Breast epithelium (tissue), 4 donors: ENCODE measurements at regions of chr2 and their contacts with region 1.

Region 1: DNA sequence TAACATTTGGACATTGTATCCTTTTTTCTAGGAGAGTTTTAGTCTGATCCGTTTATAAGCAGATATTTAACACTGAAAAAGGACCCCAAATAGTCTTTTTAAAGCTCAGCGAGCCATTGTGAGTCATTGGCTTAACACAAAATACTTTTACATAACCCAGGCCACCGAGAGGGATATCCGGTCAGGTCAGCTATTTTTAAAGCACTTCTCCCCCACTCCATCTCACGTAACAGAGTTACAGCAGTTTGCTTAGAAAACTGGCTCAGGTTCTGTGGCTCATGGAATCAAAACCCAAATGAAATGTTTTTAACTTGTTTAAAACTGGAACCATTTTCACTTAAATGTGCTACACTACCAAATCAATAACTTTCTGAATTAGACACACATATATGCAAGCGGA is 23.9 kb downstream of the COL4A3 start:
- DNase-seq: no peak
- H3K4me3 ChIP-seq: no peak overlapping the region
- H3K27ac ChIP-seq: no peak overlapping the region
- H3K4me1 ChIP-seq: no peaks in the 10 kb centered on the region
- H3K27me3 ChIP-seq: no peaks in the 10 kb centered on the region
- CTCF ChIP-seq: no peak
- POLR2A ChIP-seq: no peak

Region 2: DNA sequence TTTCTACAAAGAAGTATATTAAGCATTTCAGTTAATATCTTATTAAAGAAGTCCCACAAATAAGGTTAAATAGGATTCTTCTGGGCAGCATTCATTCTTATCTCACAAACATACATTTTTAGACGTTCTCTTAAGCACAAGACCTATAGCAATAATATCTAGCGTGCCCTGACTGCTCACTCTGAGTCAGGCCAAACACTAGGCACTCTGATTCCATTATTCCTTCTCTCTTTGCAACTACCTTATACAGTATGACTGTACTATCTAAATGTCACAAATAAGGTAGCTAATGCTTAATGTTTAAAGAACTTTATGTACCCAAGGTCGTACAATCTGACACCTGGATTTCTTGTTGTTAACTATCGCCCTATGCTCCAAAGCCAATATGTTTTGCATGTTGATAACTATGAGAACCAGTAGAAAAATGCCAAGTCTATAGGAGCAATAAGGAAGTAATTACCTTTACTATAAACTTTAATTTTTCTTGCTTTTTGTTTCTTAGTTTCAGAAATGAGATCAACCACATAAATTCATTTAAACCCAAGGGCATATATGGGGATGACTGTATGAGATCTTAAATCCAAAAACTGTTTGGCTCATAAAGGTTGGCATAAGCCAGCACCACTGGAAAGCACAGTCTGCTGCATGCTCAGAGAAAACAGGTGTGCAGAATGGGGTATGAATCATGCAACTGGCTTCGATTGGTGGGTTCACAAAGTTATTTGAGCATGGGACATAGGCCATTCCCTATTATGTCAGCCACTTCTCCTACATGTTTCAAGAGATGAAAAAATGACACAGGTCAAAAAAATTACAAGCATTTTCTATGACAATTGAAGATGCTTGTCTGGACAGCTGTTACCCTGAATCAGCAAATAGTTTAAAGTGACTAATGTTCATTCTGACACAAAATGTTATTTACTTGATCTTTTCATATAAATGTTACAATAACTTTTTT is 740.7 kb before region 1 on chr2:
- intact Hi-C with region 1: loop called (anchors 5 kb)
- DNase-seq: no peak
- H3K4me3 ChIP-seq: no peak overlapping the region
- H3K27ac ChIP-seq: no peak overlapping the region
- H3K4me1 ChIP-seq: no peaks in the 10 kb centered on the region
- H3K27me3 ChIP-seq: no peaks in the 10 kb centered on the region
- CTCF ChIP-seq: no peak
- POLR2A ChIP-seq: no peak

Region 3: DNA sequence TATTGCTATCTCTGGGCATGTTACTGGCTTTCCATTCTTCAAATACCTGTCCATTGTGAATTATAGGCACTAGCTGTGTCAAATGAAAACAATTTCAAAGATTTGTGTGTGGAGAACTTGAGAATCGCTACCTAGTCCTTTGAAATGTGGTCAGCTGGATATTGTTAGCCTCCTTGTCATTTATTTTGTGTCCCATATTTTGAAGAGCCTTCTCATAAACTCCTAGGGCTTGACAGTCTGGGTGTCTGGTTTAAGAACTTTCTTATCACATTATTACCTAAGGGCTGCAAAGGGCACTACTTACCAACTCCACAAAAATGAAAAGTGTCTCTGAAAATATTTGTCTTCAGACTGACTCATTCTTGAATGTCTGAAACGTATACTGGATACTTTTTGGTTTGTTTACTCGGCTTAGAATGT is 26.3 kb after region 1 on chr2:
- intact Hi-C with region 1: no loop called
- DNase-seq: no peak
- H3K4me3 ChIP-seq: no peak overlapping the region
- H3K27ac ChIP-seq: no peak overlapping the region
- H3K4me1 ChIP-seq: no peaks in the 10 kb centered on the region
- H3K27me3 ChIP-seq: no peaks in the 10 kb centered on the region
- CTCF ChIP-seq: no peak
- POLR2A ChIP-seq: no peak

Region 4: DNA sequence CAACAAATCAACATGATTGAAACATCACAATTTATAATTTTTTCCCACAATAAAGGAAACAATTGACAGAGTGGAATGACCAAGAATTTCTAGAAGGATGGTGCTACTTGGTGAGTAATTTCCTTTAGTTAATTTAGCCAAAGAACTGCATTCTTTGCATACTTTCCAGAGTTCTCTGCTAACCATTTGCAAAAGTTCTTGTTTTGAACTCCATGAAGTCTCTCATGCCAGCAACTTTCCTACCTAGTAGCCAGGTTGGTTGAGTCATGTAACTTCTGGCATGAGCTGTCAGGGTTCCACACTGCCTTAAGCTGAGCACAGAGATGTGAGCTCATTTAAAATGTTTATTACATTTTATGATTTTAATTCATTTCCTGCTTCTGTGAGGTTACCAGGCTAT is 1543.2 kb after region 1 on chr2:
- intact Hi-C with region 1: no loop called
- DNase-seq: no peak
- H3K4me3 ChIP-seq: no peak overlapping the region
- H3K27ac ChIP-seq: no peak overlapping the region
- H3K4me1 ChIP-seq: no peaks in the 10 kb centered on the region
- H3K27me3 ChIP-seq: no peaks in the 10 kb centered on the region
- CTCF ChIP-seq: no peak
- POLR2A ChIP-seq: no peak